ENCODE measurements at regions of chr2 and their contacts with region 1.

Region 1: GRCh38 chr2:10911261-10912075 is at the start of gene KCNF1:
- DNase-seq: no peak
- H3K4me3 ChIP-seq: peak within 1 kb of the TSS; percentile 32 to 64 (median 46)
- H3K27ac ChIP-seq: no peak within 1 kb of the TSS
- H3K4me1 ChIP-seq: peaks cover 3 to 28% (median 10%) of the 10 kb centered on the region in 4 experiments
- H3K27me3 ChIP-seq: peaks cover 13 to 40% (median 29%) of the 10 kb centered on the region in 4 experiments; a peak in 6 of 7 replicates
- CTCF ChIP-seq: peak in 2 of 3 experiments; percentile 19 to 34; a peak in 2 of 4 replicates
- EP300 ChIP-seq: no peak
- POLR2A ChIP-seq: no peak
- RAD21 ChIP-seq: peak; percentile 36 to 39
- total RNA-seq, gene KCNF1: 0.48 and 0.90 TPM in 2 replicates

Region 2: DNA sequence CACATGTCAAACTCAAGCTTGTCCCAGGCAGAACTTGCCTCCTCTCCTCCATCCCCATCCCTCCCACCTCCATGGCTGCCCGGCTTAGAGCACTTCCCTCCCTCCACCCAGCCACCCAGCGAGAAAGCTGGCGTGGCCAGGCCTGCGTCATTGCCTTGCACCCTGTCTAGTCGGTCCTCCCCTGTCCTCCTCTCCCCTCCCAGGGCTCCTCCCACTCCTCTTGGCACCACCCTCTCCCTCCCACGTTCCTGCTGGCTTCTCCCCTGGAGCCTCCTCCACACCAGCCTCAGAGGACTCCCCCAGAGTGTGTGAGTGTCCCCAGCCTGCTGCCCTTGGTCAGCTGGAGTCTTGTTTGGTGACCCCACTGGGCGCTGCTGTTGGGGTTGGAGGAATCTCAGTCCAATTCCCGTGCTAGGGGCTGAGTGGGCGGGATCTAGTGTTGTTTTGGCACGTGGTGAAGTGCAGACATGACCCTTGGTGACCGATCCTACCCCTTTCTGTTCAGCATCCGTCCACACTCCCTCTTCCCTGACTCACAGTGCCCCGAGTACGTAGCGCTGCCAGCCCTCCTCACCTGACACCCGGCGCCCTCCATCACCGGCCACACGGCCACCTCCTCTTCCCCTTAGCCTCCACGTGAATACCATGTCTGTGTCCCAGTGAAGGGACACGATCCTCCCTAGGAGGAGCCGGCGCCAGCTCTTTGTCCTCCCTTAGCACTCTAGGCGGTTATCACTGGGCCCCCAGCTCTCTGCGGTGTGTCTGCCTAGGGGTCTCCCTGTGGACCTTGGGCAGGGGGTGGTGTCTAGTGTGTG is 148.6 kb before region 1 on chr2:
- CTCF ChIA-PET with region 1: no interaction called
- POLR2A ChIA-PET with region 1: no interaction called
- DNase-seq: no peak
- H3K4me3 ChIP-seq: no peak overlapping the region
- H3K27ac ChIP-seq: no peak overlapping the region
- H3K4me1 ChIP-seq: peaks cover 0 to 5% (median 0%) of the 10 kb centered on the region in 4 experiments; a peak in 1 of 7 replicates
- H3K27me3 ChIP-seq: no peaks in the 10 kb centered on the region
- CTCF ChIP-seq: no peak
- EP300 ChIP-seq: no peak
- POLR2A ChIP-seq: no peak
- RAD21 ChIP-seq: no peak

Region 3: GRCh38 chr2:10844097-10844496 is 67.4 kb before region 1 on chr2:
- CTCF ChIA-PET with region 1: interaction called, 234 read pairs
- POLR2A ChIA-PET with region 1: no interaction called
- DNase-seq: peak; percentile 49 to 79
- H3K4me3 ChIP-seq: peak overlapping the region in 2 of 4 experiments; percentile 2 to 5; a peak in 1 of 8 replicates
- H3K27ac ChIP-seq: no peak overlapping the region
- H3K4me1 ChIP-seq: peaks cover 0 to 6% (median 1%) of the 10 kb centered on the region in 4 experiments; a peak in 5 of 7 replicates
- H3K27me3 ChIP-seq: no peaks in the 10 kb centered on the region
- CTCF ChIP-seq: no peak
- EP300 ChIP-seq: 0 out of 3 replicates have a peak, but pooled peaks of 1 of the 2 experiments have one; percentile 22
- POLR2A ChIP-seq: no peak
- RAD21 ChIP-seq: 0 out of 4 replicates have a peak, but pooled peaks of 1 of the 2 experiments have one; percentile 6

Region 4: DNA sequence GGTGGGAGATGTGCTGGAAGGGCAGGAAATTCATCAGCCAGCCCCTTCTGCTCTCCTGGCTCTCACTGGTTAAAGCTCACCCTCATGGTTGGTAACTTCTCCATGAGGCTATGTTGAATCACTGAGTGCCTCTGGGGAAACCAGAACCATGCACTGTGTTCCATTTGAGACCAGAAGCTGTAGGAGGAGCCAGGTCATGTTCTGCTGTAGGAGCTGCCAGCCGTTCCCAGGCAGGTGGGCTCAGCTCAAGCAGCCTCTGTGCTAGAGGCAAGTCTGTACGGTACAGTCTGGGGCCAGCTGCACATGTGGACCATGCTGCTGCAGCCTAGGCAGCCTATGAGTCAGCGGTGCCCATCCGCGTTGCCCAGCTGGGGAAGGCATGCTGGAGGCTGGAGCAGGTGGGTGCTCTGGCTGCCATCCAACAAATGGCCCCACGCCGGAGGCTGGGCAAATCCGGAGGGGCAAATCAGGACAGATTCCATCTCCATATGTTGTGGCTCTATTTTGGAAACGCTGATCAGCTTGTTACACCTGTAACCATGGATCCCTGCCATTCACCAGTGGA is 21.7 kb before region 1 on chr2:
- CTCF ChIA-PET with region 1: interaction called, 23 read pairs
- POLR2A ChIA-PET with region 1: no interaction called
- DNase-seq: no peak
- H3K4me3 ChIP-seq: no peak overlapping the region
- H3K27ac ChIP-seq: no peak overlapping the region
- H3K4me1 ChIP-seq: peaks cover under 1 to 6% (median 2%) of the 10 kb centered on the region in 4 experiments; a peak in 4 of 7 replicates
- H3K27me3 ChIP-seq: no peaks in the 10 kb centered on the region
- CTCF ChIP-seq: no peak
- EP300 ChIP-seq: no peak
- POLR2A ChIP-seq: no peak
- RAD21 ChIP-seq: no peak

Region 5: DNA sequence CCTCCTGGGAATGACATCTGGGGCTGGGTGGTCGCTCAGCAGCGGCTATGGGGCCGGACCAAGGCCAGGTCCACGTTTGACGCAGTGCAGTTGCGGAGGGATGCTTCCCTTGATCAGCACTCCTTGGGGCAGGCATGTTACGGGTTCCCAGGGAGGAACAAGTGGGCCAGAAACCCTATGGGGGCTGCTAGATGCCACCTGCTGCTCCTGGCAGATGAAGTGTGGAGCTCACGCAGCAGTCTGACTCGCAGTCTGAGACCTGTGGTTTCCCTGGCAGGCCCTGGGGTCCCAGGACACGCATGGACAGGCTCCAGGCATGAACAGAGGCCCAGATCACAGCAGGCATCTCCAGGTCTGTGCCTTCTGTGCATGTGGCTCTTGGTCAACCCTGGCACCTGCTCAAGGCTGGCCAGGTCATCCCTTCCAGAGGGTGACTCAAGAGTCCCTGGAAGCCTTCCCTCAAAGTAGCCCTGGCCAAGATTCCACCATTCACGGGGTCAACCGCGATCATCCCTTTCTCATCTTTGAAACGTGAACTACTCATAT is 20.3 kb after region 1 on chr2:
- CTCF ChIA-PET with region 1: interaction called, 125 read pairs
- POLR2A ChIA-PET with region 1: no interaction called
- DNase-seq: no peak
- H3K4me3 ChIP-seq: no peak overlapping the region
- H3K27ac ChIP-seq: no peak overlapping the region
- H3K4me1 ChIP-seq: peaks cover 4 to 16% (median 11%) of the 10 kb centered on the region in 4 experiments
- H3K27me3 ChIP-seq: no peaks in the 10 kb centered on the region
- CTCF ChIP-seq: no peak
- EP300 ChIP-seq: no peak
- POLR2A ChIP-seq: no peak
- RAD21 ChIP-seq: no peak

Region 6: DNA sequence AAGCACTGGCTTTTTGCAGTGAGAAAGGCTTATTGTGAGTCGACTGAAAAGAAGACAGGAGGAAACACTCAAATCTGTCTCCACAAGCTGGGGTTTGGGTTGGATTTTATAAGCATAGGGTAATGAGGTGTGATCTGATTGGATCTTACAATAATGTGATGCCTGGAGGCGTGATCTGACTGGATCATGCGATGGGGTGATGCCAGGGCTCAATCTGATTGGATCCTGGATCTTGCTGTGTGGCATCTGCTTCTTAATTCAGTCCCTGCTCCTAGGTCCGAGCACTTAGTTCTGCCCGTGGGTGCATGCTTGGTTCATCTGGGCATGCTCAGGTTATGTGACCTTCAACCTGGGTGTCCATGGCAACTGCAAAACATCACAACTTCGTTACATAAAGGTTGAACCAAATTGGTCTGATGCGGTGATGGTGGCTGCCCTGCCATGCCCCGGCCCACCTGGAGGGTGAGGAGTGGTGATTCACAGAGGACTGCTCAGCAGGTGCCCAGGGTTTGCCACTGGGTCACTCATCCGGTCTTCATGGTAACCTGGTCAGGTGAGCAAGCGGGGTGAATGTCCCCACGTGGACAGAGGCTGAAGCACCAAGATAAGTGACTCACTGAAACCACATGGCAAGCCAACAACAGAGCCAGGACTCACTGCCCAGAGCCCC is 111.3 kb after region 1 on chr2:
- CTCF ChIA-PET with region 1: interaction called, 18 read pairs
- POLR2A ChIA-PET with region 1: no interaction called
- DNase-seq: peak in 1 of 2 experiments; percentile 40
- H3K4me3 ChIP-seq: no peak overlapping the region
- H3K27ac ChIP-seq: no peak overlapping the region
- H3K4me1 ChIP-seq: peaks cover 0 to 3% (median 1%) of the 10 kb centered on the region in 4 experiments; a peak in 3 of 7 replicates
- H3K27me3 ChIP-seq: no peaks in the 10 kb centered on the region
- CTCF ChIP-seq: no peak
- EP300 ChIP-seq: no peak
- POLR2A ChIP-seq: no peak
- RAD21 ChIP-seq: no peak

Region 7: DNA sequence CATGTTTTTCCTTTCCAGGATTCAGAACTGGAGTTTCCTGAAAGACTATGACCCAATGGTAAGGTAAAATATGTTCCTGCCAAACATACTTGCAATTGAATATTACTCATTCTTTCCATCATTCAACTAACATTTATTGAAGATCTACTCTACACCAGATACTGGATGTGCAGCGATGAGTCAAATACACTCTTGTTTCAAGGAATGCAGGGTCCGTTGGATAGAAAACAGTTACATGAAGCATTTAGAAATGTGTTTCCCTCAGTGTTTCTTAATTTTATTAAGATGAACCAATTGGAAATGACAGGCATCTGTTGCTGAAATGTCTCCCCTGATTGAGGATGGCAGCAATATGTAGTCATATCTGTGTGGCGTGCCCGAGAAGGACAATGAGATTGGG is 229.0 kb after region 1 on chr2:
- CTCF ChIA-PET with region 1: no interaction called
- POLR2A ChIA-PET with region 1: no interaction called
- DNase-seq: no peak
- H3K4me3 ChIP-seq: no peak overlapping the region
- H3K27ac ChIP-seq: no peak overlapping the region
- H3K4me1 ChIP-seq: no peaks in the 10 kb centered on the region
- H3K27me3 ChIP-seq: no peaks in the 10 kb centered on the region
- CTCF ChIP-seq: no peak
- EP300 ChIP-seq: no peak
- POLR2A ChIP-seq: no peak
- RAD21 ChIP-seq: no peak